ENCODE measurements at regions of chr19 and their contacts with region 1.

Region 1: GRCh38 chr19:16272945-16273344 is 51.7 kb upstream of the KLF2 start:
- DNase-seq: no peak
- ATAC-seq: no peak
- H3K4me3 ChIP-seq: no peak overlapping the region
- H3K27ac ChIP-seq: no peak overlapping the region
- H3K4me1 ChIP-seq: no peaks in the 10 kb centered on the region
- H3K27me3 ChIP-seq: no peaks in the 10 kb centered on the region
- CTCF ChIP-seq: no peak

Region 2: GRCh38 chr19:16402041-16402440 is 129.1 kb after region 1 on chr19:
- CTCF ChIA-PET with region 1: no interaction called
- POLR2A ChIA-PET with region 1: interaction called, 27 read pairs
- intact Hi-C with region 1: no loop called
- DNase-seq: no peak
- ATAC-seq: no peak
- H3K4me3 ChIP-seq: no peak overlapping the region
- H3K27ac ChIP-seq: no peak overlapping the region
- H3K4me1 ChIP-seq: no peaks in the 10 kb centered on the region
- H3K27me3 ChIP-seq: no peaks in the 10 kb centered on the region
- CTCF ChIP-seq: no peak

Measured in PC-3 (cell line).